Left colon (tissue), 2 donors: ENCODE measurements at regions of chr9 and their contacts with region 1.

Region 1: DNA sequence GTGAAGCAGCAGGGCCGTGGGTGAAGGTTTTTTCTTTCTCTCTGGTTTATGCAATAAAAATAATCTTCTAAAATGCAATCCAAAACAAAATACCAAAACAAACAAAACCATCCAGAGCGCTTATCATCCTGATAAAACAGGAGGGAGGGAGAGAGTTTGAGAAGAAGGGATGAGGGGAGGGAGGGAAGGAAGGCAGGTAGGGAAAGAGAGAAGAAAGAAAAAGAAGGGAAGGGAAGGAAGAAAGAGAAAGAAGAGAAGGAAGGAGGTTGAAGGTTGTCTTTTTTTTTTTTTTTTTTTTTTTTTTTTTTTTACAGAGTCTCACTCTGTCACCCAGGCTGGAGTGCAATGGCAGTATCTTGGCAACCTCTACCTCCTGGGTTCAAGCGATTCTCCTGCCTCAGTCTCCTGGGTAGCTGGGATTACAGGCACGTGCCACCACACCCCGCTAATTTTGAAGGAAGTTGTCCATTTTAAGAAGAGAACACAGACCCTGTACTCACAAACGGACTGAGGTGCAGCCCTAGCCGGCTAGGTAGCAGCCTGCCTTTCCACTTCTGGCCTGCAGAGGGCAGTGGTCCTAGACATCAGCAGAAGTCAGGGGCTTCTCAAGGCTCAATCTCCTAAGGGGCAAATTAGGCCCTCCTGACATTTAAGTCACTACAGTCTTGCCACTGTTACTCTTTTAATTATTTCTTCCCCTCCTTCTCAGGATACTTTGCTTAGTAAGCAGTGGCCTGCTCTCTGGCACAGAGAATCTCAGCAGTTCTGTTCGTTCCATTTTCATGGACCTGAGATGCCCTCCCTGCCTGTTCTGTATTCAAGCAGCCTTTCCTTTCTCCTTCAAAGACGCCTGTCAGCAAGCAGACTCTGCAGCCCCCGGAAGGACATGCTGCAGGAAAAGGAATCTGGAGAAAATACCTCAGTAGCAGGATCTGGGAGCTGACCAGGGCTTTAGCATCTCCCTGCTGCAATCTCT is 76.4 kb downstream of the EPB41L4B start:
- DNase-seq: peak; percentile 56 to 82
- ATAC-seq: peak; percentile 79

Region 2: GRCh38 chr9:109320742-109321448 is 76.5 kb after region 1 on chr9 and contains the start of gene EPB41L4B:
- intact Hi-C with region 1: loop called in 1 of 2 experiments (anchors 5 kb)
- DNase-seq: peak; percentile 85 to 96
- ATAC-seq: peak; percentile 58
- total RNA-seq, gene EPB41L4B: 147 to 150 TPM

Region 3: GRCh38 chr9:109469646-109470358 is 225.4 kb after region 1 on chr9:
- intact Hi-C with region 1: loop called in 1 of 2 experiments (anchors 10 kb)
- DNase-seq: peak; percentile 58 to 69
- ATAC-seq: peak; percentile 97